ENCODE measurements at regions of chr21 and their contacts with region 1.

Region 1: GRCh38 chr21:43600642-43601402 is 58.5 kb downstream of the HSF2BP start:
- DNase-seq: peak; percentile 95
- ATAC-seq: peak; percentile 79
- H3K4me3 ChIP-seq: no peak overlapping the region
- H3K27ac ChIP-seq: peak overlapping the region; percentile 96
- H3K4me1 ChIP-seq: peaks cover 36% of the 10 kb centered on the region
- H3K27me3 ChIP-seq: no peaks in the 10 kb centered on the region
- CTCF ChIP-seq: no peak
- POLR2A ChIP-seq: no peak
- RAD21 ChIP-seq: peak; percentile 15; the same call in 1 of the 2 replicates

Region 2: GRCh38 chr21:43211072-43211759 is 389.6 kb before region 1 on chr21:
- CTCF ChIA-PET with region 1: no interaction called
- POLR2A ChIA-PET with region 1: no interaction called
- dilution Hi-C with region 1: no loop called
- in situ Hi-C with region 1: no loop called
- intact Hi-C with region 1: no loop called
- DNase-seq: no peak
- ATAC-seq: no peak
- H3K4me3 ChIP-seq: no peak overlapping the region
- H3K27ac ChIP-seq: no peak overlapping the region
- H3K4me1 ChIP-seq: peaks cover 2% of the 10 kb centered on the region; the same call in 1 of the 2 replicates
- H3K27me3 ChIP-seq: peaks cover 13% of the 10 kb centered on the region; the same call in 1 of the 2 replicates
- CTCF ChIP-seq: 0 out of 2 replicates have a peak, but pooled peaks have one; percentile 12
- POLR2A ChIP-seq: no peak
- RAD21 ChIP-seq: no peak

Region 3: GRCh38 chr21:43585924-43586424 is 14.8 kb before region 1 on chr21:
- CTCF ChIA-PET with region 1: interaction called, 3 read pairs
- POLR2A ChIA-PET with region 1: no interaction called
- dilution Hi-C with region 1: no loop called
- in situ Hi-C with region 1: no loop called
- intact Hi-C with region 1: loop called (anchors 1 kb)
- DNase-seq: peak; percentile 98
- ATAC-seq: peak; percentile 93
- H3K4me3 ChIP-seq: no peak overlapping the region
- H3K27ac ChIP-seq: peak overlapping the region; percentile 51; the same call in 1 of the 2 replicates
- H3K4me1 ChIP-seq: peaks cover 6% of the 10 kb centered on the region
- H3K27me3 ChIP-seq: no peaks in the 10 kb centered on the region
- CTCF ChIP-seq: no peak
- POLR2A ChIP-seq: no peak
- RAD21 ChIP-seq: no peak; the same call in 1 of the 2 replicates

Region 4: DNA sequence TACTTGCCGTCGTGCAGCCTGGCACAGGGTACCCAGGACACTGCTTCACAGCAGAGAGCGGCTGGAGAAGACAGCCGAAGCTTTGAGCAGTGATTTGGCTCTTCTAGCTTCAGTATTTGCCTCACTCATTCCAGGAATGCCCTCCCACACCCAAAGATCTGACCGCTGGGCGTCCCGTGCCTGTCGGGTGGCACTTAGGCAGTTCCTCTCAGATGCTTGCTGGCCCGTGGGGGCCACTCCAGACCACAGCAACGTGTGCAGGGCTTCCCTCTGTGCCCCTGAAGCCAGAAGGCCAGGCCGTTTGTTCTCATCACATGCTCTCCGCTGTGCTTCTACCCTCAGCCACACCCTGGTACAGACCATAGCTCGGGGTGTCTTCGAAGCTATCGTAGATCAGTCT is 75.6 kb after region 1 on chr21:
- CTCF ChIA-PET with region 1: no interaction called
- POLR2A ChIA-PET with region 1: no interaction called
- dilution Hi-C with region 1: no loop called
- in situ Hi-C with region 1: no loop called
- intact Hi-C with region 1: no loop called
- DNase-seq: no peak
- ATAC-seq: no peak
- H3K4me3 ChIP-seq: no peak overlapping the region
- H3K27ac ChIP-seq: no peak overlapping the region
- H3K4me1 ChIP-seq: no peaks in the 10 kb centered on the region
- H3K27me3 ChIP-seq: no peaks in the 10 kb centered on the region
- CTCF ChIP-seq: no peak
- POLR2A ChIP-seq: no peak
- RAD21 ChIP-seq: no peak

Region 5: DNA sequence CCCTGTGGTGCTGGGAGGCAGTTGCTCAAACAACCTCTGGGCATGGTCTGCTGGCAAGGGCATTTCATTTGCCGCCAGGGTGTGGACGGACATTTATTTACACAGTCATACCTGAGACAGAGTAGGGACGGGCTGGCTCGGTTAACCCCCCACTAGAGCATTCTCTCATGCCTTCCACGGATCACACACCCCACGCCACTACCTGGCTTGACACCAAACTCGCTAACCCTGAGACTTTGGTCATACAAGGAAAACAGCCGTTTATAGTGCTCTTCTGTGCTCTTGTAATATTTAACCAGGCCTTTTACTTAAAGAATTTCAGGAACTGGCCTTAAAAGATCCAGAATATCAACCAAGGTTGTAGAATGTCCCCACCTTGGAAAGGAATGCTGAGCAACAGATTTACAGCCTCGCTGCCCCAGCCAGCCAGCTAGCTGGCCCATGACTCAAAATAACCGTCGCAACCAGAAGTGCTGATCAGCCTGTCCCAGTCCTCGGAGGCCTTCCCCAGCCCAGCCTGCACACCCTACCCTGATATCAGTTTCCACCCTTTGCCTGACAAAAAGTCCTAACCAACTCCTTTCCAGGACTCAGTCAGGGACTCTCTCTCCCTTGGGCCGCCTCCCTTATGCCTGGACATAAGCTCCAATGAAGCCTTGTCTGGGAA is 111.6 kb after region 1 on chr21:
- CTCF ChIA-PET with region 1: no interaction called
- POLR2A ChIA-PET with region 1: no interaction called
- dilution Hi-C with region 1: no loop called
- in situ Hi-C with region 1: no loop called
- intact Hi-C with region 1: no loop called
- DNase-seq: peak; percentile 32
- ATAC-seq: peak; percentile 53
- H3K4me3 ChIP-seq: no peak overlapping the region
- H3K27ac ChIP-seq: no peak overlapping the region
- H3K4me1 ChIP-seq: peaks cover 3% of the 10 kb centered on the region; the same call in 1 of the 2 replicates
- H3K27me3 ChIP-seq: no peaks in the 10 kb centered on the region; the same call in 1 of the 2 replicates
- CTCF ChIP-seq: no peak
- POLR2A ChIP-seq: no peak
- RAD21 ChIP-seq: no peak

Measured in IMR-90 (cell line).